ENCODE measurements at regions of chr2 and their contacts with region 1.

Region 1: GRCh38 chr2:99489761-99490622 is at the start of gene REV1:
- DNase-seq: peak in 1 of 2 donors; percentile 96
- H3K4me3 ChIP-seq: peak within 1 kb of the TSS; percentile 90 to 93
- H3K27ac ChIP-seq: peak within 1 kb of the TSS; percentile 98
- H3K4me1 ChIP-seq: peaks cover 52% of the 10 kb centered on the region
- H3K27me3 ChIP-seq: no peaks in the 10 kb centered on the region
- CTCF ChIP-seq: peak; percentile 27 to 82 (median 81)
- POLR2A ChIP-seq: peak in 1 of 2 donors; percentile 47
- total RNA-seq, gene REV1: 102 TPM

Region 2: DNA sequence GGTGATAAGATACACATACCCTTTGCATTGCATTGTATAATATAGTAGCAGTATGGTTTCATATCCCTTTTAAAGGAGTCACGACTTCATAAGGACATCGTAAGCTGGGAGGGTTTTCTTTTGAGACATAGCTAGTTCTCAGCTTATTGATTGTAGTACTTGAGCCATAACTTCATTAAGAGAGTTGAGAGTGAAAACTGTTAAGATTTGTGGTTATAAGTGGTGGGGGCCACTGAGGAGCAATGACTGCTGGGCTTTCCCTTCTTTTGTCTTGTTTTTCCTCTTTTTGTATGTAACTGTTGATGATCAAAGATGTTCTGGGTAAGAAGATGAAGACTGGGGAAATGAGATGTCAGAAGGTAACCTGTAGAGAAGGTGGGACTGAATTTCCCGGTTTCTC is 141.8 kb before region 1 on chr2:
- intact Hi-C with region 1: loop called (anchors 10 kb)
- DNase-seq: no peak
- H3K4me3 ChIP-seq: no peak overlapping the region
- H3K27ac ChIP-seq: no peak overlapping the region
- H3K4me1 ChIP-seq: peaks cover 15% of the 10 kb centered on the region
- H3K27me3 ChIP-seq: no peaks in the 10 kb centered on the region
- CTCF ChIP-seq: no peak
- POLR2A ChIP-seq: no peak

Measured in vagina (tissue), 2 donors.